ENCODE measurements at regions of chr3 and their contacts with region 1.

Region 1: DNA sequence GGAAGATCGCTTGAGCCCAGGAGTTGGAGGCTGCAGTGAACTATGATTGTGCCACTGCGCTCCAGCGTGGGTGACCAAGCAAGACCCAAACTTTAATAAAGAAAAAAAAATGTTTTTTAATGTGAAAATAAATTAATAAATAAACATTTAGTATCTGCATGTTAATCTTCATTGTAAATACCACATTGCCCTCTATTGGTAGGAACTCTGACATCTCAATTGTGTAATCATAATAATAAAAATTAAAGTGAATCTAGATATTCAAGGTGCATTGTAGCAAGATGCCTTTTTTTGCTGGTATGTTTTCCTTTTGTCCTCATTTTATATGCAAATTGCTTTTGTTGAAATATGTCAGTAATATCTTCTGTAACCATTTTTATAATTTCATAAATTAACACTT is 95.0 kb upstream of the LIMD1 start:
- DNase-seq: peak; percentile 72
- ATAC-seq: peak; percentile 66; the same call in 1 of the 2 replicates
- H3K4me3 ChIP-seq: no peak overlapping the region
- H3K27ac ChIP-seq: no peak overlapping the region
- H3K4me1 ChIP-seq: no peaks in the 10 kb centered on the region
- H3K27me3 ChIP-seq: no peaks in the 10 kb centered on the region
- CTCF ChIP-seq: peak; percentile 66

Region 2: GRCh38 chr3:44803298-44803697 is 696.2 kb before region 1 on chr3:
- CTCF ChIA-PET with region 1: no interaction called
- POLR2A ChIA-PET with region 1: no interaction called
- intact Hi-C with region 1: loop called (anchors 5 kb)
- DNase-seq: no peak
- ATAC-seq: no peak
- H3K4me3 ChIP-seq: no peak overlapping the region
- H3K27ac ChIP-seq: no peak overlapping the region
- H3K4me1 ChIP-seq: no peaks in the 10 kb centered on the region
- H3K27me3 ChIP-seq: no peaks in the 10 kb centered on the region
- CTCF ChIP-seq: no peak

Region 3: DNA sequence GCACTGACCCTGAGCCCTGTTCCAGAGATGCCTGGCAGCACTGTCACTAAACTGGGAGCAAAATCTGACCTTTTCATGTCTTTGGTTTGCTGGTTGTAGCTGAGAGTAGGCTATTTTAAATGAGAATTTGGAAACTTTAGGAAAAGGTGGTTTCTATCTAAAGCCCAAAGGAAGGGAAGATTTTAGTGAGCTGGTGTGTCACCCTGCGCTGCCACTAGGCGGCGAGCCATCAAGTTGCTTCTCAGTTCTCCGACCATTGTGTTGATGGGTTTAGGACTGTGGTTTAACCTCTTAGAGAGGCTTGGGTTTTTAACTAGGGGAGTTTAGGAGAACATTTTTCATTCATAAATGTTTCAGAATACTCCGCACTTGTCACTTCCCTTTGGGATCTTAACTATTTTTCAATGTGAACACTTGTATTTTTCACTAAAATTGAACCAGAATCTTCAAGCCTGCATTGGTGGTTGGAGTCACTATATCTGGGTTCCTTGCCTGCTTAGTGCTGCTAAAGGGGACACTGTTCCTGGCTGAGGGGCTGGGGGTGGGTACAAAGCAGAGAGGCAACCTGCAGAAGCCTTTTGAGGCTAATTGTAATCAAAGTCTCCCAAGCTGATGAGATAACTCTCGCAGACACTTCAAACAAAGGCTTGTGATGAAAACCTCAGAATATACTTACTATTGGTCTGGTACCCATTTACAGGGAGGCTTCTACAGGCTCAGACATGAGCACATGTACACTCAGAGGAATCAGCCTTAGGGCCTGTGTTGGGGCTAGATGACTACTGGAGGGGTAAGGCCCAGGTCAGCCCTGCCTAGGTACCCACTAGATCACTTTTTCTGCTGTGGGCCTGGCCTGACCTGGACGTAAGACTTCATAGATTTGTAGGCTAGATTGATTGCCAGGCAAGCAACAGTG is 506.7 kb before region 1 on chr3:
- CTCF ChIA-PET with region 1: no interaction called
- POLR2A ChIA-PET with region 1: interaction called, 10 read pairs
- intact Hi-C with region 1: no loop called
- DNase-seq: peak; percentile 38
- ATAC-seq: no peak
- H3K4me3 ChIP-seq: no peak overlapping the region
- H3K27ac ChIP-seq: peak overlapping the region; percentile 68
- H3K4me1 ChIP-seq: peaks cover 42% of the 10 kb centered on the region
- H3K27me3 ChIP-seq: no peaks in the 10 kb centered on the region
- CTCF ChIP-seq: peak; percentile 89

Region 4: GRCh38 chr3:45037734-45038455 is 461.6 kb before region 1 on chr3:
- CTCF ChIA-PET with region 1: interaction called, 7 read pairs
- POLR2A ChIA-PET with region 1: interaction called, 3 read pairs
- intact Hi-C with region 1: loop called (anchors 1 kb)
- DNase-seq: peak; percentile 98
- ATAC-seq: peak; percentile 77
- H3K4me3 ChIP-seq: peak overlapping the region; percentile 40; the same call in 1 of the 2 replicates
- H3K27ac ChIP-seq: no peak overlapping the region
- H3K4me1 ChIP-seq: peaks cover 29% of the 10 kb centered on the region
- H3K27me3 ChIP-seq: no peaks in the 10 kb centered on the region
- CTCF ChIP-seq: peak; percentile 97

Region 5: GRCh38 chr3:45224824-45225464 is 274.6 kb before region 1 on chr3:
- CTCF ChIA-PET with region 1: interaction called, 4 read pairs
- POLR2A ChIA-PET with region 1: no interaction called
- intact Hi-C with region 1: loop called (anchors 1 kb)
- DNase-seq: peak; percentile 73
- ATAC-seq: peak; percentile 61
- H3K4me3 ChIP-seq: peak overlapping the region; percentile 76
- H3K27ac ChIP-seq: peak overlapping the region; percentile 64
- H3K4me1 ChIP-seq: peaks cover 15% of the 10 kb centered on the region
- H3K27me3 ChIP-seq: no peaks in the 10 kb centered on the region
- CTCF ChIP-seq: peak; percentile 58

Region 6: DNA sequence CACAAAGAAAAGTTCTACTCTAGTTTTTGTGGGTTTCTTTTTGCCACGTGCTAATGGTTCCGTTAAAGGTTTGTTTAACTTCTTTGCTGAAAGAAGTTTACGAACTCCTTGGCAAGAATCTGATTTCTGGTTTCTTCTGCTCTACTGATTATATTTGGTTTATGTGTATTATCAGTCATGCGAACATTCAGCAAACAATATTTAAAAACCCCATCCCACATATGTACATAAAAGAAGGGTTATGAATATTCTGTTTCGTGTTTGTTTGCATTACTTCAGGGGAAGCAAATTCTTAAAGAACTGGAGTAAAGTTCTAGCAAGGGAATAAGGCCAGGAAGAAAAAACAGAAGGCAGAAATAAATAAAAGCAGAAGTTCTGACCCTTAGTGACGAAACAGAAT is 101.4 kb before region 1 on chr3:
- CTCF ChIA-PET with region 1: no interaction called
- POLR2A ChIA-PET with region 1: no interaction called
- intact Hi-C with region 1: loop called (anchors 5 kb)
- DNase-seq: peak; percentile 82
- ATAC-seq: peak; percentile 96
- H3K4me3 ChIP-seq: peak overlapping the region; percentile 16; the same call in 1 of the 2 replicates
- H3K27ac ChIP-seq: peak overlapping the region; percentile 70
- H3K4me1 ChIP-seq: peaks cover 16% of the 10 kb centered on the region
- H3K27me3 ChIP-seq: no peaks in the 10 kb centered on the region
- CTCF ChIP-seq: no peak

Region 7: GRCh38 chr3:45426161-45426560 is 73.4 kb before region 1 on chr3:
- CTCF ChIA-PET with region 1: no interaction called
- POLR2A ChIA-PET with region 1: no interaction called
- intact Hi-C with region 1: no loop called
- DNase-seq: no peak
- ATAC-seq: no peak
- H3K4me3 ChIP-seq: no peak overlapping the region
- H3K27ac ChIP-seq: no peak overlapping the region
- H3K4me1 ChIP-seq: no peaks in the 10 kb centered on the region
- H3K27me3 ChIP-seq: no peaks in the 10 kb centered on the region
- CTCF ChIP-seq: no peak

Region 8: DNA sequence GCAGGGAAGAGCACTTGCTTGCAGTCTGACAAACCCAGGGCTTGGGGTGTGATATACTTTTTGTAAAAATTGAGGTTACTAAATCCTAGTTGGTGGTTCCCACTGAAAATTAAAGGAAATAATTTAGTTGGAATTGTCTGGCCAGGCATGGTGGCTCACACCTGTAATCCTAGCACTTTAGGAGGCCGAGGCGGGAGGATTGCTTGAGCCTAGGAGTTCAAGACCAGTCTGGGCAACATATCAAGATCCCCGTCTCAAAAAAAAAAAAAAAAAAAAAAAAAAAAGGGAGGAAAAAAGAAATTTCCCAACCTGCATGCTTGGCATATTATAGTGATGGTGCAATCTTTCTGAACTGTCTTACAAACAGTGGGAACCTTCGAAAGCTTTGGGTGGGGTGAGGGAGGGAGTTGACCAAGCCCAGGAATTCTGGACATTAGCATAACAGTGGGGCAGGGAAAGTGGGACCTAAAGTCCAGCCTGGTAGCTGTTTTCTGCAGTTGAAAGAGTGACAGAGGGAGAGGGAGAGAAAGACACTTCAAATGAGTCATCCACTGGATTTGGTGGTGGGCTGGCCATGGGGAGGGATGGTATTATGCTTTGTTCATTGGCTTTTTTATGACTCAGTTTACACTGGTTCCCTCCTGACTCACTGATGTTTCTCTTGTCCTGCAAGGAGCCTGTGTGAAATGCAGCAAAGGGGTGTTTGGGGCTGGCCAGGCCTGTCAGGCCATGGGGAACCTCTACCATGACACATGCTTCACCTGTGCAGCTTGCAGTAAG is 136.1 kb after region 1 on chr3:
- CTCF ChIA-PET with region 1: no interaction called
- POLR2A ChIA-PET with region 1: no interaction called
- intact Hi-C with region 1: no loop called
- DNase-seq: peak; percentile 56
- ATAC-seq: 0 out of 2 replicates have a peak, but pooled peaks have one; percentile 31
- H3K4me3 ChIP-seq: no peak overlapping the region
- H3K27ac ChIP-seq: no peak overlapping the region; the same call in 1 of the 2 replicates
- H3K4me1 ChIP-seq: peaks cover 17% of the 10 kb centered on the region
- H3K27me3 ChIP-seq: no peaks in the 10 kb centered on the region
- CTCF ChIP-seq: no peak